OCI-LY7 (cell line): ENCODE measurements at regions of chr21 and their contacts with region 1.

Region 1: GRCh38 chr21:29098156-29098555 is 24.7 kb upstream of the CCT8 start:
- DNase-seq: no peak
- H3K4me3 ChIP-seq: no peak overlapping the region
- H3K27ac ChIP-seq: no peak overlapping the region
- H3K4me1 ChIP-seq: no peaks in the 10 kb centered on the region
- CTCF ChIP-seq: no peak

Region 2: DNA sequence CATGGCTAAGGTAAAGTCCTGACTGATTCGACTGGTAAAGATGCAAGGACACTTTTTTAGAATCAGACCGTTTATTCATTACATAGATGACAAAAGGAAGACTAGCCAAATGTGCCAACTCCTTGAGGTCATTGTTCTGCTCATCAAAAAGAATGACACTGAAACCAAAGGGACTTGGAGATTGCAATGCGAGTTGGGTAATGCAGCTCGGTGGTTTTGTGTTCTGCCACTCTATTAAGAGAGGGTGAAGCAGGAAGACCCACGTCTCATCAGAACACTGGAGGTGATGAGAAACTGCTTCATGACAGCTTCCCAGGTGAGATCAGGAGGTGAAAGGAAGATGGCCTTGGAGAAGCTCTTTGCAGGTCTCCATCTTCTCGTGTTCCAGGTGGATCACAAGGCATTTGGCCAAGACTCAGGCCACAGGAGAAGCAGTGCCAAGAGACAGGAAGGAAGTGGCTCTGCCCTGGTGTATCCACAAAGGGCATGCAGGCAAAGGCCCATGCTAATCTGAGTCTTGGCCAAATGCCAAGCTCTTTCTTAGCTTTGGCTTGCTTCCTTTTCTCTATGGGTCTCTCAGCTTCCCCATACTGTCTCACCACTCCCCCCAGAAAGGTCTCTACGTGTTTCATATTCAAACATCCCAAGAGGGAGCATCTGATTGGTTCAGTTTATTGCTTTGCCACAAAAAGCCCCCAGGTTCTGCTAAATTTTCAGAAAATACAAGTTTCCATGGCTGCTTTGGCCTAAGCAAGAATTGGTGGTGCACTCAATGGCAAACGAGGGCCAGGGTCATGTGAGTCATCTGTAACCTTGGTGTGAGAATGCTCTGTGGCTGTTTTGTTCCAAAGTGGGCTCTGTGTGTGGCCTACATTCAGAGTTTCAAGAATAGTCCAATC is 19.0 kb before region 1 on chr21:
- CTCF ChIA-PET with region 1: interaction called, 3 read pairs
- POLR2A ChIA-PET with region 1: interaction called, 12 read pairs
- intact Hi-C with region 1: no loop called
- DNase-seq: peak; percentile 66
- H3K4me3 ChIP-seq: no peak overlapping the region
- H3K27ac ChIP-seq: peak overlapping the region; percentile 0
- H3K4me1 ChIP-seq: peaks cover 33% of the 10 kb centered on the region
- CTCF ChIP-seq: no peak